Activated naive CD4-positive, alpha-beta T cell treated with anti-CD3 and anti-CD28 coated beads for 36 hours (primary cell): ENCODE measurements at regions of chr15 and their contacts with region 1.

Region 1: GRCh38 chr15:68820295-68821189 is at the start of gene ANP32A:
- DNase-seq: peak; percentile 95
- H3K4me3 Mint-ChIP-seq: peak within 1 kb of the TSS; percentile 84
- H3K27ac Mint-ChIP-seq: peak within 1 kb of the TSS; percentile 94
- H3K4me1 Mint-ChIP-seq: peaks cover 31% of the 10 kb centered on the region
- H3K27me3 Mint-ChIP-seq: no peaks in the 10 kb centered on the region
- total RNA-seq, gene ANP32A: 216 to 245 TPM

Region 2: DNA sequence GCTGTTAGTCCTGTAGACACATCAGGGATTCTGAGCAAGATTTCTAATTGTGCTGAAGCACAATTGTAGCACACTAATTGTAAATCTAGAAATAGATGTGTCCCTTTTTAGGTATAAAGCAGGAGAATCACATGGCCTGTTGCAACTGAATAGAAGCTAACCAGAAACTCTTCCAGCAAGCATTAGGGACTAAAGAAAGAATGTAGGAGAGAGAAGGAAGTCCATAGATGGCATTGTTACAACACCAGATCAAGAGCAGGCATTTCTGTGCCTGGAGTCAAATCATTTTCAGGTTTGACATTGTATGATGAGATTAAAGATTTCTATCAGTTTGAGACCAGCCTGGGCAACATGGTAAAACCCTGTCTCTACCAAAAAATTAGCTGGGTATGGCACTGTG is 642.8 kb before region 1 on chr15:
- CTCF ChIA-PET with region 1: no interaction called
- intact Hi-C with region 1: no loop called
- DNase-seq: no peak
- H3K4me3 Mint-ChIP-seq: no peak overlapping the region
- H3K27ac Mint-ChIP-seq: no peak overlapping the region
- H3K4me1 Mint-ChIP-seq: peaks cover 4% of the 10 kb centered on the region
- H3K27me3 Mint-ChIP-seq: no peaks in the 10 kb centered on the region

Region 3: DNA sequence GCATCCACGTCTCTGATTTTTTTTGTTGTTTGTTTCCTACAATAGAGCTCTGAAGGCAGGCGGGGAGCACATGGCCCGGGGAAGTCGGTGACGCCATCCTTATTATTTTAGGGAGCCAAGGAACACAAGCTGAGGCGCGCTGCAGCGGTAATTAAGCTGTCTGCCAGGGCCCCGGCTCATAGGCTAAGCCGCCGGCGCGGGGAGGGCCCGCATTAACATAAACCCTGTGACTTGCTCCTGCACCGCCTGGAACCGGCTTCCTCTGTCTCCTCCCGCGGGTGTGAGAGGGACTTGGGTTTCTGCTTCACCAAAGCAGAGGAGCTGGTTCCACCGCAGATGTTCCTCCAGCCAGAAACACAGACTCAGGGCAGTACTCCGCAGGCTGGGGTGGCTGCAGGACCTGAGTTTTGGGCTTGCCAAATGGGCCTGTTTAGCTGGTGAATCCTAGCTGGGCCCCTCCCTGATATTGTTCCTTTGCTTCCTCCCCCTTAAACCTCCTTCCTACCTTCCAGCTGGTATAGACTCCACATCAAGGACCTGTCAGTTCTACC is 25.2 kb before region 1 on chr15:
- CTCF ChIA-PET with region 1: interaction called, 4 read pairs
- intact Hi-C with region 1: loop called (anchors 1 kb)
- DNase-seq: peak; percentile 91
- H3K4me3 Mint-ChIP-seq: peak overlapping the region; percentile 32
- H3K27ac Mint-ChIP-seq: peak overlapping the region; percentile 65
- H3K4me1 Mint-ChIP-seq: peaks cover 98% of the 10 kb centered on the region
- H3K27me3 Mint-ChIP-seq: no peaks in the 10 kb centered on the region

Region 4: GRCh38 chr15:69323966-69324365 is 503.4 kb after region 1 on chr15:
- CTCF ChIA-PET with region 1: no interaction called
- intact Hi-C with region 1: loop called (anchors 2 kb)
- DNase-seq: no peak
- H3K4me3 Mint-ChIP-seq: no peak overlapping the region
- H3K27ac Mint-ChIP-seq: no peak overlapping the region
- H3K4me1 Mint-ChIP-seq: peaks cover 20% of the 10 kb centered on the region
- H3K27me3 Mint-ChIP-seq: peaks cover 12% of the 10 kb centered on the region

Region 5: DNA sequence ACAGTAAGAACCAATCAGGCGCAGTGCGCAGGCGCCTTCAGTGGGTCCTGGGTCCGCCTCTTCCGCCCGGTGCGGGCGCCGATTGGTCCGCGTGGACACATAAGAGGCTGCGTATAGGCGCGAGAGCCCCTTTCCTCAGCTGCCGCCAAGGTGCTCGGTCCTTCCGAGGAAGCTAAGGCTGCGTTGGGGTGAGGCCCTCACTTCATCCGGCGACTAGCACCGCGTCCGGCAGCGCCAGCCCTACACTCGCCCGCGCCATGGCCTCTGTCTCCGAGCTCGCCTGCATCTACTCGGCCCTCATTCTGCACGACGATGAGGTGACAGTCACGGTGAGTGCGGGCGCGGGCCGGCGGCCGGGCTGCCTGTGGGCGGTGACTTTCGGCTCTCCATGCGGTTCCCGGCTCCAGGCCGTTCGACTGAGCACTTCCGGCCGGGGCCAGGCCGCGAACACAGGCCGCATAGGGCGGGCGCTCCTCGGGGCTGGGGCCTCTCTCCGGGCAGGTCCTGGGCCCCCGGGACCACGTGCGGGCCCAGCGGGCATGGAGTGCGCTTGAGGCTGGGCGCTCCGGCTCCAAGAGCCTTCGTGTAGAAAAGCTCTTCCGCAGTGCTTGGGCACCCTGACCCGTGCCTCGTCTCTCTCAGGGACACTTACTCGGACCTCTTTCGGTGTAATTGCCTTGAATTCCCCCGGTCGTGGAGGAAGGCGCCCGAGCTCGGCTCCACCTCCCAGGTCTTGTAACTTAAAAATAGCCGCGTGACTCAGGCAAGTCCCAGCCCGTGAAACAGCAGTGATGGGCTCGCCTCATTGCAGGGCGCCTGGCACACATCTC is 632.4 kb after region 1 on chr15 and contains the start of gene RPLP1:
- CTCF ChIA-PET with region 1: no interaction called
- intact Hi-C with region 1: loop called (anchors 5 kb)
- DNase-seq: peak; percentile 95
- H3K4me3 Mint-ChIP-seq: peak within 1 kb of the TSS; percentile 99
- H3K27ac Mint-ChIP-seq: peak within 1 kb of the TSS; percentile 99
- H3K4me1 Mint-ChIP-seq: peaks cover 27% of the 10 kb centered on the region
- H3K27me3 Mint-ChIP-seq: no peaks in the 10 kb centered on the region
- total RNA-seq, gene RPLP1: 2,674 to 2,950 TPM